HAP-1 (cell line): ENCODE measurements at regions of chr7 and their contacts with region 1.

Region 1: GRCh38 chr7:25402532-25402931 is 174.2 kb upstream of the NPVF start:
- DNase-seq: no peak
- H3K4me3 ChIP-seq: no peak overlapping the region
- H3K4me1 ChIP-seq: no peaks in the 10 kb centered on the region
- H3K27me3 ChIP-seq: peaks cover 25% of the 10 kb centered on the region

Region 2: GRCh38 chr7:24318326-24318725 is 1084.2 kb before region 1 on chr7:
- in situ Hi-C with region 1: no loop called
- DNase-seq: peak; percentile 29 to 34
- H3K4me3 ChIP-seq: no peak overlapping the region
- H3K4me1 ChIP-seq: no peaks in the 10 kb centered on the region
- H3K27me3 ChIP-seq: no peaks in the 10 kb centered on the region

Region 3: DNA sequence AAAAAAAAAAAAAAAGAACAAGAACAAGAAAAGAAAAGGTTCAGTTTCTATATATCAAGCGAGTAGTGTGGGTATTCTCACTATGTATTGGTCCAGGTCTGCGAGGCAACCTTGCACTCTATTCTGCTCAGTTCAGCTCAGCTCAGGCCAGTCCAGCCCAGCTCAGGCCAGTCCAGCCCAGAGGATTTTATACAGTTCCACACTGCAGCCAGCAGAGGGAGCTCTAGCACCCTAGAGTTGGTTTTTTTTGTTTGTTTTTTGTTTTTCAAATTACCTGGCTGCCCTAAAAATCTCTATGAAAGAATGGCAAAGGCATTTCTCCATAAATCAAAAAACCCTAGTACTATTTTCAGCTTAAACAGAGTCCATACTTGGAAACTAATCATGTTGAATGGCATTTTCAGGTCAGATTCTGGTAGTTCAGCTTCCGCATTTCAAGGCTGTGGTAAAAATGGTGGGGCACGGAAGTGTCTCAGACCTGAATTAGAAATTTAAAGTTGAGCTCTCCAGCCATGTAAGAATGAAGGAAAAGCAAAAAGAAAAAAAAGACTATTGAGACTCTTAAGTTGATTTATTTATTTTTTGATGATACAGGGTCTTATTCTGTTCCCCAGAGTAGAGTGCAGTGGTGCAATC is 590.1 kb before region 1 on chr7:
- in situ Hi-C with region 1: no loop called
- DNase-seq: peak in 1 of 2 experiments; percentile 67
- H3K4me3 ChIP-seq: no peak overlapping the region
- H3K4me1 ChIP-seq: no peaks in the 10 kb centered on the region
- H3K27me3 ChIP-seq: no peaks in the 10 kb centered on the region

Region 4: GRCh38 chr7:25559581-25560367 is 157.2 kb after region 1 on chr7:
- in situ Hi-C with region 1: loop called (anchors 5 kb)
- DNase-seq: no peak
- H3K4me3 ChIP-seq: no peak overlapping the region
- H3K4me1 ChIP-seq: peaks cover 37% of the 10 kb centered on the region
- H3K27me3 ChIP-seq: no peaks in the 10 kb centered on the region